Colonic mucosa (tissue), 4 donors: ENCODE measurements at regions of chr16 and their contacts with region 1.

Region 1: GRCh38 chr16:75110637-75111513 is 5.7 kb downstream of the LDHD start:
- DNase-seq: peak; percentile 95
- H3K4me3 ChIP-seq: no peak overlapping the region
- H3K27ac ChIP-seq: peak overlapping the region; percentile 59
- H3K4me1 ChIP-seq: peaks cover 22% of the 10 kb centered on the region
- H3K27me3 ChIP-seq: no peaks in the 10 kb centered on the region
- CTCF ChIP-seq: peak; percentile 91

Region 2: DNA sequence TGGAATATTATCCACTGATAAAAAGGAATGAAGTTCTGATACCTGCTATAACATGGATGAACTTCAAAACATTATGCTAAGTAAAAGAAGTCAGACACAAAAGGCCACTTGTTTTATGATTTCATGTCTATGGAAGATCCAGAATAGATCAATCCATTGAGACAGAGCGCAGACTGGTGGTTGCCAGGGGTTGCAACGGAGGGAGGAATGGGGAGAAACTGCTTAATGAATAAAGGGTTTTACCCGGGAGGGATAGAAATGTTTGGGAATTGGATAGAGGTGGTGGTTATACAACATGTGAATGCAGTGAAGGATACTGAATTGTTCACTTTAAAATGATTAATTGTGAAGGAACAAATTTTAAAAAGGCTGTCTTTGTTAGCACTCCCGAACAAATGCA is 156.1 kb before region 1 on chr16:
- intact Hi-C with region 1: no loop called
- DNase-seq: no peak
- H3K4me3 ChIP-seq: no peak overlapping the region
- H3K27ac ChIP-seq: no peak overlapping the region
- H3K4me1 ChIP-seq: no peaks in the 10 kb centered on the region
- H3K27me3 ChIP-seq: no peaks in the 10 kb centered on the region
- CTCF ChIP-seq: no peak

Region 3: GRCh38 chr16:74998481-74999218 is 112.2 kb before region 1 on chr16 and contains the start of gene ZNRF1:
- intact Hi-C with region 1: loop called (anchors 2 kb)
- DNase-seq: peak; percentile 92
- H3K4me3 ChIP-seq: peak within 1 kb of the TSS; percentile 84
- H3K27ac ChIP-seq: peak within 1 kb of the TSS; percentile 52
- H3K4me1 ChIP-seq: no peaks in the 10 kb centered on the region
- H3K27me3 ChIP-seq: no peaks in the 10 kb centered on the region
- CTCF ChIP-seq: peak; percentile 72
- total RNA-seq, gene ZNRF1: 27.7 to 29.7 TPM

Region 4: GRCh38 chr16:75043175-75043895 is 67.5 kb before region 1 on chr16:
- intact Hi-C with region 1: no loop called
- DNase-seq: no peak
- H3K4me3 ChIP-seq: no peak overlapping the region
- H3K27ac ChIP-seq: no peak overlapping the region
- H3K4me1 ChIP-seq: peaks cover 6% of the 10 kb centered on the region
- H3K27me3 ChIP-seq: no peaks in the 10 kb centered on the region
- CTCF ChIP-seq: no peak

Region 5: GRCh38 chr16:75234856-75235696 is 124.2 kb after region 1 on chr16:
- intact Hi-C with region 1: no loop called
- DNase-seq: peak; percentile 21
- H3K4me3 ChIP-seq: no peak overlapping the region
- H3K27ac ChIP-seq: no peak overlapping the region
- H3K4me1 ChIP-seq: no peaks in the 10 kb centered on the region
- H3K27me3 ChIP-seq: no peaks in the 10 kb centered on the region
- CTCF ChIP-seq: no peak